Heart right ventricle (tissue), 16 donors: ENCODE measurements at regions of chr5 and their contacts with region 1.

Region 1: GRCh38 chr5:56070851-56071465 is 76.2 kb upstream of the IL6ST start:
- DNase-seq: no peak
- ATAC-seq: peak in 6 of 8 donors; percentile 42 to 79 (median 56)
- H3K4me3 ChIP-seq: peak overlapping the region in 3 of 10 donors; percentile 1 to 6 (median 1)
- H3K27ac ChIP-seq: peak overlapping the region; percentile 17 to 79 (median 65)
- H3K4me1 ChIP-seq: peaks cover 0 to 52% (median 38%) of the 10 kb centered on the region in 9 donors
- H3K27me3 ChIP-seq: no peaks in the 10 kb centered on the region
- CTCF ChIP-seq: no peak

Region 2: GRCh38 chr5:55578771-55579170 is 492.2 kb before region 1 on chr5:
- intact Hi-C with region 1: no loop called
- DNase-seq: peak in 1 of 2 donors; percentile 32
- ATAC-seq: peak; percentile 63 to 89 (median 82)
- H3K4me3 ChIP-seq: no peak overlapping the region
- H3K27ac ChIP-seq: peak overlapping the region; percentile 63 to 93 (median 77)
- H3K4me1 ChIP-seq: peaks cover 14 to 61% (median 56%) of the 10 kb centered on the region in 9 donors
- H3K27me3 ChIP-seq: no peaks in the 10 kb centered on the region
- CTCF ChIP-seq: no peak

Region 3: DNA sequence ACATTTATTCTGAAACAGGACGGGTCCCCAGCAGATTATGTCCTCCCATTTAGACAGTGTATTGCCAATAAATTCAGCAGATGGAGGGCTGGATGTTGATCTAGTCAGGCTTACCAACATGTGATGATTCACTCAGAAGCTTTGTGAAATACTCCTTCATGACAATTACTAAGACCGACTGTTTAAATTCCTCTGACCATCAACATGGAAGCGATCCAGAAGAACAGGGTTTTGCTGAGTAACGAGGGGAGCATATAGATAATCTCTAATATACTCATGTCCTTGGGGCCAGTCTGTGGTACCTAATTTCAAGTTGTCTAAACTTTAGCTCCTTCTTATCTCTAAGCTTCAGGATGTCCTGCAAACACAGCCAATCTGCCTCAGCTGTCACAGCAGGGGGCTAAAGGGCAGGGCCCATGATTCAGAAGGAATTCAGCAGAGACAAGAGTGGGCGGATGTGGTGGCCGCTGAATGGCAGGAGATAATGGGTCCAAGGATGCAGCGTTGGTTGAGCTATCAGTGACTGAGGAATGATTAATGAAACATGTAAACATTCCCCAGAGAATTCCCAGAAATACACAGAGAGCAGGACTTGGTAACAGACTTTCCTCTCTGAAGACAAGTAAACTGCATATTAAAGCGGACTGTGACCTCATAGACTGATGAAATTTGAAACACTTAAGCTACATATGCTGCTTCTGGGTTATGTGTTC is 52.7 kb after region 1 on chr5:
- intact Hi-C with region 1: no loop called
- DNase-seq: peak; percentile 37 to 56
- ATAC-seq: peak; percentile 75 to 96 (median 84)
- H3K4me3 ChIP-seq: no peak overlapping the region
- H3K27ac ChIP-seq: peak overlapping the region in 7 of 10 donors; percentile 0 to 70 (median 29)
- H3K4me1 ChIP-seq: peaks cover 0 to 34% (median 12%) of the 10 kb centered on the region in 9 donors
- H3K27me3 ChIP-seq: no peaks in the 10 kb centered on the region
- CTCF ChIP-seq: no peak

Region 4: GRCh38 chr5:56175488-56175887 is 104.5 kb after region 1 on chr5:
- intact Hi-C with region 1: loop called in 3 of 10 experiments (anchors 5 to 10 kb)
- DNase-seq: peak in 1 of 2 donors; percentile 46
- ATAC-seq: peak; percentile 65 to 86 (median 76)
- H3K4me3 ChIP-seq: no peak overlapping the region
- H3K27ac ChIP-seq: peak overlapping the region in 8 of 10 donors; percentile 0 to 62 (median 25)
- H3K4me1 ChIP-seq: peaks cover 0 to 68% (median 41%) of the 10 kb centered on the region in 9 donors
- H3K27me3 ChIP-seq: no peaks in the 10 kb centered on the region
- CTCF ChIP-seq: no peak